ENCODE measurements at regions of chr5 and their contacts with region 1.

Region 1: GRCh38 chr5:93249651-93250289 is 331.2 kb downstream of the NR2F1-AS1 start:
- DNase-seq: peak; percentile 87
- H3K4me3 ChIP-seq: peak overlapping the region in 2 of 3 experiments; percentile 14 to 58
- H3K27ac ChIP-seq: peak overlapping the region; percentile 88
- H3K4me1 ChIP-seq: peaks cover 26% of the 10 kb centered on the region
- H3K27me3 ChIP-seq: no peaks in the 10 kb centered on the region
- CTCF ChIP-seq: no peak
- POLR2A ChIP-seq: peak; percentile 57

Region 2: DNA sequence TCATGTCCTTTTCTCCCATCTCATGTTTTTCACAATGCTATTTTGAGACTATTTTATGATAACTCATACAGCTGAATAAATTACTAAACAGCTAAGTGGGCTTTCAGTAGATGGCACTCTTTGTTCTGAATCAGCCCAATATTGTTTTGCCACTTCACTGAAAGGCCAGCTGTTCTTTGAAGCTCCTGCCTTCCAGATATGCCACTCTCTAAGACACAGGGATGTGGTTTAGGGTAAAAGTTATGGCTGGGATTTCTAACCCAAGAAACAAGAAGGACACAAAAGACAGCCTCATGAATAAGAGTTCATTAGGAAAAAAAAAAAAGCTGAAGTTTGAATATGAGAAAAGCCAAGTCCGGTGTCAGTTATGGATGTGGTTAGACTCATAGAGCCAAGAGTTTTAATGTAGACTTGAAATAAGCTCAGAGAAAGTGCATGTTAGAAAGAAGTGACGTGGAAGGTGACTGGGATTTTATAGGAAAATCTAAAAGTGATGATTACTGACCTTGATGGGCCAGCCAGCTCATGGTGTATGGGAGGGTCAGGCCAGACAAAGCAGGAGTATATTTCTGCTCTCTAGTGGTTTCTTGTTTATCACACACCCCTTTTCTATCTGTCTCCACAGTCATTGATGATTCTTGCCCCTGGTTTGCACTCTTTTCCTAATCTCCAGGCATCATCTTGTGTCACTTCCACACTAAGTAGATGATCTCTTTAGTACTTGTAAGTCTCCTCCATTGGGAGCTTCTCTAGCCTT is 157.2 kb before region 1 on chr5:
- CTCF ChIA-PET with region 1: interaction called, 14 read pairs
- POLR2A ChIA-PET with region 1: no interaction called
- dilution Hi-C with region 1: no loop called
- intact Hi-C with region 1: no loop called
- DNase-seq: peak; percentile 82
- H3K4me3 ChIP-seq: no peak overlapping the region
- H3K27ac ChIP-seq: no peak overlapping the region
- H3K4me1 ChIP-seq: no peaks in the 10 kb centered on the region
- H3K27me3 ChIP-seq: no peaks in the 10 kb centered on the region
- CTCF ChIP-seq: peak; percentile 13 to 33
- POLR2A ChIP-seq: no peak